Caco-2 (cell line): ENCODE measurements at regions of chr1 and their contacts with region 1.

Region 1: GRCh38 chr1:112515311-112516009 is 6.7 kb downstream of the WNT2B start:
- DNase-seq: no peak
- H3K4me3 ChIP-seq: no peak overlapping the region
- H3K4me3 Mint-ChIP-seq: no peak overlapping the region
- H3K27ac Mint-ChIP-seq: no peak overlapping the region
- H3K4me1 ChIP-seq: no peaks in the 10 kb centered on the region
- H3K4me1 Mint-ChIP-seq: no peaks in the 10 kb centered on the region
- H3K27me3 ChIP-seq: no peaks in the 10 kb centered on the region
- H3K27me3 Mint-ChIP-seq: peaks cover under 1% of the 10 kb centered on the region
- CTCF ChIP-seq: no peak

Region 2: GRCh38 chr1:112565800-112566199 is 50.3 kb after region 1 on chr1:
- CTCF ChIA-PET with region 1: no interaction called
- POLR2A ChIA-PET with region 1: no interaction called
- intact Hi-C with region 1: loop called (anchors 2 kb)
- DNase-seq: no peak
- H3K4me3 ChIP-seq: no peak overlapping the region
- H3K4me3 Mint-ChIP-seq: no peak overlapping the region
- H3K27ac Mint-ChIP-seq: no peak overlapping the region
- H3K4me1 ChIP-seq: no peaks in the 10 kb centered on the region
- H3K4me1 Mint-ChIP-seq: no peaks in the 10 kb centered on the region
- H3K27me3 ChIP-seq: no peaks in the 10 kb centered on the region
- H3K27me3 Mint-ChIP-seq: no peaks in the 10 kb centered on the region
- CTCF ChIP-seq: no peak